ENCODE measurements at regions of chr7 and their contacts with region 1.

Region 1: GRCh38 chr7:100705753-100706671 is at the start of gene POP7:
- DNase-seq: peak; percentile 96 to 99 (median 98)
- H3K4me3 ChIP-seq: peak within 1 kb of the TSS; percentile 93
- H3K4me3 Mint-ChIP-seq: peak within 1 kb of the TSS; percentile 88 to 98 (median 96)
- H3K27ac ChIP-seq: peak within 1 kb of the TSS; percentile 81
- H3K27ac Mint-ChIP-seq: peak within 1 kb of the TSS; percentile 86 to 97 (median 94)
- H3K4me1 ChIP-seq: peaks cover 14% of the 10 kb centered on the region
- H3K4me1 Mint-ChIP-seq: peaks cover 12 to 19% (median 15%) of the 10 kb centered on the region in 3 donors
- H3K27me3 ChIP-seq: no peaks in the 10 kb centered on the region
- H3K27me3 Mint-ChIP-seq: peaks cover 2 to 3% of the 10 kb centered on the region in 2 donors
- total RNA-seq, gene POP7: 79.7 to 83.3 TPM

Region 2: GRCh38 chr7:100428967-100429636 is 276.9 kb before region 1 on chr7:
- CTCF ChIA-PET with region 1: interaction called, 3 read pairs
- POLR2A ChIA-PET with region 1: interaction called, 15 read pairs
- DNase-seq: peak; percentile 100
- H3K4me3 ChIP-seq: peak overlapping the region; percentile 96
- H3K4me3 Mint-ChIP-seq: peak overlapping the region; percentile 96 to 100 (median 98)
- H3K27ac ChIP-seq: peak overlapping the region; percentile 100
- H3K27ac Mint-ChIP-seq: peak overlapping the region; percentile 94 to 100 (median 100)
- H3K4me1 ChIP-seq: peaks cover 34% of the 10 kb centered on the region
- H3K4me1 Mint-ChIP-seq: peaks cover 31 to 56% (median 35%) of the 10 kb centered on the region in 3 donors
- H3K27me3 ChIP-seq: no peaks in the 10 kb centered on the region
- H3K27me3 Mint-ChIP-seq: peaks cover 0 to 13% of the 10 kb centered on the region in 2 donors

Region 3: GRCh38 chr7:100611974-100612729 is 93.9 kb before region 1 on chr7 and contains the start of gene MOSPD3:
- CTCF ChIA-PET with region 1: interaction called, 12 read pairs
- POLR2A ChIA-PET with region 1: interaction called, 8 read pairs
- DNase-seq: peak; percentile 96 to 98 (median 98)
- H3K4me3 ChIP-seq: peak within 1 kb of the TSS; percentile 99
- H3K4me3 Mint-ChIP-seq: peak within 1 kb of the TSS; percentile 91 to 100 (median 99)
- H3K27ac ChIP-seq: peak within 1 kb of the TSS; percentile 99
- H3K27ac Mint-ChIP-seq: peak within 1 kb of the TSS; percentile 94 to 100 (median 100)
- H3K4me1 ChIP-seq: peaks cover 19% of the 10 kb centered on the region
- H3K4me1 Mint-ChIP-seq: peaks cover 20 to 24% (median 23%) of the 10 kb centered on the region in 3 donors
- H3K27me3 ChIP-seq: no peaks in the 10 kb centered on the region
- H3K27me3 Mint-ChIP-seq: no peaks in the 10 kb centered on the region
- total RNA-seq, gene MOSPD3: 16.2 to 16.3 TPM

Region 4: DNA sequence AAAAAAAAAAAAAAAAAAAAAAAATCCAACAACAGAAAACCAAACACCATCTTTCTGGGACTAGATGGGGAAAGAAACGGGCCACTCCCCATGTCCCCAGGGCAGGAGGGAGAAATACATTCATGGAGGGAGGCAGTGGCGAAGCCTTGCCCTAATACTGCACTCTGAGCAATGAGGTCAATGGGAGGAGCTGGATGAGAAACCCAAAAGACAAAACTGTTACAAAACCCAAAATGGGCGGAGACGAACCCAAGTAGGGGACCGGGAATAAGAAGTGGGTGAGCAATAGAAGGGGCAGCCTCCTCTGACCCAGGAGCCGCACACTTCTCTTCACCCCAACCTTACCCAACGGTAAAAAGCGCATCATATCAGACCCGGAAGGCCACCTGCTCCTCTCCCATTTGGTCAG is 25.8 kb before region 1 on chr7:
- CTCF ChIA-PET with region 1: interaction called, 18 read pairs
- POLR2A ChIA-PET with region 1: interaction called, 11 read pairs
- DNase-seq: no peak
- H3K4me3 ChIP-seq: no peak overlapping the region
- H3K4me3 Mint-ChIP-seq: peak overlapping the region in 1 of 7 donors; percentile 70
- H3K27ac ChIP-seq: no peak overlapping the region
- H3K27ac Mint-ChIP-seq: peak overlapping the region; percentile 8 to 94 (median 51)
- H3K4me1 ChIP-seq: peaks cover 24% of the 10 kb centered on the region
- H3K4me1 Mint-ChIP-seq: peaks cover 29 to 46% (median 33%) of the 10 kb centered on the region in 3 donors
- H3K27me3 ChIP-seq: no peaks in the 10 kb centered on the region
- H3K27me3 Mint-ChIP-seq: peaks cover 0 to 2% of the 10 kb centered on the region in 2 donors

Region 5: DNA sequence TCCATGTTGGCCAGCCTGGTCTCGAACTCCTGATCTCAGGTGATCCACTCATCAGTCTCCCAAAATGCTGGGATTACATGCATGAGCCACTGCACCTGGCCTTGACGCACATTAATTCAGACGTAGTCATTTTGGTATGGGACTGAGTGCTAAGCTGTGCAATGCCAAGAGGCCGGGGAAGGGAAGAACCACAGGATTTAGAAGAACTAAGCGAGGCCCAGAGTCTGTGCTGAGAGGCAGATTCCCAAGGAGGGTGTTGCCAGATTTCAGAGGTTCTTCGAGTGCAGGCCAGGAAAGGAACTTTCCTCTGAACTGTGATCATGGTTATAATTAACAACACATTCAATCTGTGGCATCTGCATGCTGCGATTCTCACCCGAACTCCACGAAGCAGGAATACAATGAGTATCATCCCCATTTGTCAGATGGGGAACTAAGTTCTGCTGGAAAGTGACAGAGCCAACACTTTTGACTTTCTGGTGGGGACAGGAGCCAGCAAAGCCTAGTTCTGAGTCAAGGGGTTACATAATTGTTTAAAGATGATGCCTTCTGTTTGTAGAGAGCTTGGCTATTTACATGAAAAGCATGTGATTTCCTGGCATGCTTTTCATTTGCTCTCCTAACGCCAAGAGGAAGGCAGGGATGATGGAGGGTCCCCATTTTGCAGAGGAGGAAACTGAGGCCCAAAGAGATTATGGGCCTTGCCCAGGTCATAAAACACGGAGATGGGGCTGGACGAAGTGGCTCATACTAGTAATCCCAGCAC is 21.2 kb after region 1 on chr7:
- CTCF ChIA-PET with region 1: interaction called, 31 read pairs
- POLR2A ChIA-PET with region 1: no interaction called
- DNase-seq: peak in 1 of 5 donors; percentile 15
- H3K4me3 ChIP-seq: no peak overlapping the region
- H3K4me3 Mint-ChIP-seq: no peak overlapping the region
- H3K27ac ChIP-seq: no peak overlapping the region
- H3K27ac Mint-ChIP-seq: peak overlapping the region in 1 of 8 donors; percentile 60
- H3K4me1 ChIP-seq: peaks cover 5% of the 10 kb centered on the region
- H3K4me1 Mint-ChIP-seq: peaks cover 3 to 5% (median 3%) of the 10 kb centered on the region in 3 donors
- H3K27me3 ChIP-seq: peaks cover 6% of the 10 kb centered on the region
- H3K27me3 Mint-ChIP-seq: peaks cover 21 to 32% of the 10 kb centered on the region in 2 donors

Measured in CD8-positive, alpha-beta memory T cell (primary cell).